T-cell (primary cell): ENCODE measurements at regions of chr12 and their contacts with region 1.

Region 1: GRCh38 chr12:89556976-89557375 is 31.1 kb upstream of the POC1B start:
- DNase-seq: no peak
- ATAC-seq: no peak
- H3K4me3 ChIP-seq: no peak overlapping the region
- H3K4me3 Mint-ChIP-seq: no peak overlapping the region
- H3K27ac ChIP-seq: no peak overlapping the region
- H3K27ac Mint-ChIP-seq: no peak overlapping the region
- H3K4me1 ChIP-seq: no peaks in the 10 kb centered on the region
- H3K4me1 Mint-ChIP-seq: no peaks in the 10 kb centered on the region
- H3K27me3 ChIP-seq: no peaks in the 10 kb centered on the region
- H3K27me3 Mint-ChIP-seq: no peaks in the 10 kb centered on the region

Region 2: GRCh38 chr12:89306827-89307473 is 250.0 kb before region 1 on chr12:
- CTCF ChIA-PET with region 1: interaction called in 1 of 2 experiments, 11 read pairs
- POLR2A ChIA-PET with region 1: no interaction called
- DNase-seq: peak in 1 of 35 experiments; percentile 1
- ATAC-seq: no peak
- H3K4me3 ChIP-seq: no peak overlapping the region
- H3K4me3 Mint-ChIP-seq: no peak overlapping the region
- H3K27ac ChIP-seq: no peak overlapping the region
- H3K27ac Mint-ChIP-seq: no peak overlapping the region
- H3K4me1 ChIP-seq: peaks cover 0 to 5% of the 10 kb centered on the region in 2 experiments
- H3K4me1 Mint-ChIP-seq: peaks cover 6 to 27% (median 12%) of the 10 kb centered on the region in 3 donors
- H3K27me3 ChIP-seq: no peaks in the 10 kb centered on the region
- H3K27me3 Mint-ChIP-seq: no peaks in the 10 kb centered on the region